CD14-positive monocyte (primary cell): ENCODE measurements at regions of chr17 and their contacts with region 1.

Region 1: GRCh38 chr17:30336369-30337171 is 2.7 kb upstream of the TMIGD1 start:
- DNase-seq: peak; percentile 34 to 60 (median 60)
- H3K4me3 ChIP-seq: no peak overlapping the region
- H3K4me3 Mint-ChIP-seq: no peak overlapping the region
- H3K27ac ChIP-seq: no peak overlapping the region
- H3K27ac Mint-ChIP-seq: peak overlapping the region in 4 of 7 donors; percentile 30 to 80 (median 58)
- H3K4me1 ChIP-seq: peaks cover 23 to 38% of the 10 kb centered on the region in 2 donors
- H3K4me1 Mint-ChIP-seq: peaks cover 48% of the 10 kb centered on the region
- H3K27me3 ChIP-seq: no peaks in the 10 kb centered on the region
- H3K27me3 Mint-ChIP-seq: peaks cover 1 to 3% (median 2%) of the 10 kb centered on the region in 3 donors
- CTCF ChIP-seq: peak; percentile 97

Region 2: GRCh38 chr17:30124273-30124796 is 212.2 kb before region 1 on chr17:
- intact Hi-C with region 1: loop called in 1 of 2 experiments (anchors 10 kb)
- DNase-seq: no peak
- H3K4me3 ChIP-seq: no peak overlapping the region
- H3K4me3 Mint-ChIP-seq: no peak overlapping the region
- H3K27ac ChIP-seq: peak overlapping the region in 1 of 2 donors; percentile 44
- H3K27ac Mint-ChIP-seq: peak overlapping the region; percentile 6 to 92 (median 74)
- H3K4me1 ChIP-seq: peaks cover 4% of the 10 kb centered on the region in 2 donors
- H3K4me1 Mint-ChIP-seq: peaks cover 13% of the 10 kb centered on the region
- H3K27me3 ChIP-seq: no peaks in the 10 kb centered on the region
- H3K27me3 Mint-ChIP-seq: no peaks in the 10 kb centered on the region
- CTCF ChIP-seq: no peak

Region 3: DNA sequence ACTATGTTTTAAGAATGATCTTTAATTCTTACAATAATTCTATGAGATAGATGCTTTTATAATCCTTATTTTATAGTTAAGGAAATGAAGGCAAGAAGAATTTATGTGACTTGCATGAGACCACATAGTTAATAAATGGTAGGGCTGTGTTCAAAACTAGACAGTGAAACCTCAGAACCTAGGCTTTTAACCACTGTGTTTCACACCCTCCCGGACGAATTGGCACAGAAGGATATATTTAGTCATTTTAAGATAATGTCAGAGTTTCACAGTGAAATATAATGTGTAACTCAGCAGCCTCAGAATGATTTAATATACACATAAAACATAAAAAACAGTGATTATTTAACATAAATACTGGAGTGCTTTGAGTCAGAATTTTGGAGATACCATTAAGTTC is 162.9 kb before region 1 on chr17:
- intact Hi-C with region 1: no loop called
- DNase-seq: no peak
- H3K4me3 ChIP-seq: no peak overlapping the region
- H3K4me3 Mint-ChIP-seq: no peak overlapping the region
- H3K27ac ChIP-seq: no peak overlapping the region
- H3K27ac Mint-ChIP-seq: no peak overlapping the region
- H3K4me1 ChIP-seq: no peaks in the 10 kb centered on the region
- H3K4me1 Mint-ChIP-seq: no peaks in the 10 kb centered on the region
- H3K27me3 ChIP-seq: no peaks in the 10 kb centered on the region
- H3K27me3 Mint-ChIP-seq: no peaks in the 10 kb centered on the region
- CTCF ChIP-seq: no peak

Region 4: DNA sequence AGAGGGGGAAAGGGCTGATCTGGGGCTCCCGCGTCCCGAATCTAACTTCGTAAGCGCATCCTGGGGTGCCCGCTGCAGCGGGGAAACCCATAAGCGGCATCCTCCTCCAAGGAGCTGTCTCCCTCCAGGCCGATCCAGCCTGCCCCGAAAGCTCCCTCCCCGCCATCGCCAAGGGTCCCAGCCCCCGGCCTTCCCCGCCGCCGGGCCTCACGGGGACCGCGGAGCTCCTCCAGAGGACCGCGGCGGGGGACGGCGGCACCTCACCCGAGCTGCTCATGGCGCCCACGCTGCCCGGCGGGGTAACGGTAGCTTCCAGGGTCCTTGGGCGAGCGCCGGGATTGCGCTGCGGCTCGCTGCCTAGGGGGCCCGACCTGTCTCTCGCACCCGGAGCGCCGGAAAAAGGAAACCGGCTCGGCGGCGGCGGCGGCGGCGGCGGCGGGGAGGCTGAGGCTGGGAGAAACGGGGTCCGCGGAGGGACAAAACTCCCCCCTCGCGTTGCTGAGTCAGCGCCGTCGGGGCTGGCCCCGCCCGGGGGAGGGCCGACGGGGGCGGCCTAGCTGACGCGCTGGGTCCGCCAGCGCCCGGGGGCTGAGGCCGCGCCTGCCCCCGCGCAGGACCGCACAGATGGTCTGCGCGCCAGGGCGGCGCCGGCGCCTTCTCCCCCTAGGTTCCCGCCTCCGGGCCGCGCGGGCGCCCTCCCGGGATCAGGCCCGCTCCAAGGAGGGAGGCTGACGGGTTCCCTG is 44.9 kb before region 1 on chr17 and contains the start of gene BLMH:
- intact Hi-C with region 1: loop called in 1 of 2 experiments (anchors 5 kb)
- DNase-seq: peak; percentile 52 to 65 (median 60)
- H3K4me3 ChIP-seq: peak within 1 kb of the TSS; percentile 70 to 96 (median 93)
- H3K4me3 Mint-ChIP-seq: peak within 1 kb of the TSS; percentile 89 to 95
- H3K27ac ChIP-seq: peak within 1 kb of the TSS in 1 of 2 donors; percentile 12
- H3K27ac Mint-ChIP-seq: peak within 1 kb of the TSS in 6 of 7 donors; percentile 14 to 89 (median 54)
- H3K4me1 ChIP-seq: peaks cover 17 to 21% of the 10 kb centered on the region in 2 donors
- H3K4me1 Mint-ChIP-seq: peaks cover 14% of the 10 kb centered on the region
- H3K27me3 ChIP-seq: peaks cover 4 to 9% of the 10 kb centered on the region in 2 donors
- H3K27me3 Mint-ChIP-seq: peaks cover 4 to 8% (median 8%) of the 10 kb centered on the region in 3 donors
- CTCF ChIP-seq: no peak
- polyA plus RNA-seq, gene BLMH: 6.6 to 10.8 (median 10.4) TPM